A549 (cell line): ENCODE measurements at regions of chr11 and their contacts with region 1.

Region 1: DNA sequence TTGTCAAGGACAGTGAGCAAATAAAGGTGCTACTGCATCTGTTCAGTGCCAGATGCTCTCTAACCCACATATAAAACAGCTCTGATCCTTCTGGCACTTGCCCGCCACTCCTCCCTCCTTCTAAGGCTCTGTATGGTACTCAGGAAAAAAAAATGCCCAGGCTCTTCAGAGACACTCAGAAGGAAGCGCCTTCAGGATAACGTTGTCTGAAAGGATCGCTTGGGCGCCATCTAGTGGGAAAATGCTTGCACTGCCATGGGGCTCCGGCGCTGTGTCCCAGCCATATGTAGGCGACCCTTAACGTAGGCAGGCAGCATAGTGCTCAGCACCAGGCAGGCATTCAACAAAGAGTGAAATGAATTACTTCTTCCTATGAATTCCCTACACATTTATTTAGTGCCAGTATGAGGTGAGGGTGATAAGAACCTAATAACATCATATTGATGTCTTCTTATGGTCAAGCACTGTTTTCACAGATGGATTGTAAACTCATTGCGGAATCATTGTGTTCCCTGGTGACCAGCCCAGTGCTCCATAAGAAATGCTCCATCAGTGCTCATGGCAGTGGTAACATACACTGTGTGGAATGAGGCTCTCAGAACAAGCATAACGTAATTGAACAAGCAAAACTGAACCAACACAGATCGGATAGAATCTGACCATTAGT is 39.6 kb downstream of the PAMR1 start:
- DNase-seq: peak; percentile 65 to 77
- ATAC-seq: peak; percentile 96 to 99
- H3K4me3 ChIP-seq: no peak overlapping the region
- H3K27ac ChIP-seq: no peak overlapping the region
- H3K4me1 ChIP-seq: peaks cover under 1% of the 10 kb centered on the region; the same call in 1 of the 3 replicates
- CTCF ChIP-seq: peak; percentile 81
- EP300 ChIP-seq: no peak
- POLR2A ChIP-seq: no peak
- RAD21 ChIP-seq: peak; percentile 69 to 75

Region 2: GRCh38 chr11:35458846-35459245 is 26.9 kb before region 1 on chr11:
- CTCF ChIA-PET with region 1: interaction called, 12 read pairs
- POLR2A ChIA-PET with region 1: no interaction called
- DNase-seq: no peak
- ATAC-seq: no peak
- H3K4me3 ChIP-seq: no peak overlapping the region
- H3K27ac ChIP-seq: no peak overlapping the region
- H3K4me1 ChIP-seq: no peaks in the 10 kb centered on the region
- CTCF ChIP-seq: no peak
- EP300 ChIP-seq: no peak
- POLR2A ChIP-seq: no peak
- RAD21 ChIP-seq: no peak

Region 3: GRCh38 chr11:35496416-35496815 is 10.6 kb after region 1 on chr11:
- CTCF ChIA-PET with region 1: interaction called, 27 read pairs
- POLR2A ChIA-PET with region 1: no interaction called
- DNase-seq: no peak
- ATAC-seq: no peak
- H3K4me3 ChIP-seq: no peak overlapping the region
- H3K27ac ChIP-seq: no peak overlapping the region
- H3K4me1 ChIP-seq: peaks cover 8% of the 10 kb centered on the region; the same call in 2 of the 3 replicates
- CTCF ChIP-seq: no peak
- EP300 ChIP-seq: no peak
- POLR2A ChIP-seq: no peak
- RAD21 ChIP-seq: no peak